CD4-positive, alpha-beta T cell (primary cell): ENCODE measurements at regions of chr5 and their contacts with region 1.

Region 1: DNA sequence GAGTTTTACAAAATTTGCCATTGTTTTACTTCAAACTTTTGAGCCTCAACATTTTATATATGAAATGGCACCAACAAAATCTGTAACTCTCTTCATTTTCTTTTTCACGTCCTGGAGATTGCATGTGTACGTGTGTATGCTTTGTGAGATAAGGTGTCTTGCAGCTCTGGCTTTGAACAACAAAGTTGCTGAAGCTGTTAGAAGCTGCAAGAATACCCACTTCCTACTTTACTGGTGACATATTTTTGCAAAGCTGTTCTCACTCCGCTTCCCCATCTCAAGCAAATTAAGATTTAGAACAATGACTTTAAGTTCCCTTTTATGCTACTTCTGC is 41.8 kb downstream of the FYB1 start:
- DNase-seq: peak in 5 of 14 experiments; percentile 30 to 82 (median 79)
- ATAC-seq: peak; percentile 64
- H3K4me3 ChIP-seq: peak overlapping the region; percentile 29
- H3K4me3 Mint-ChIP-seq: peak overlapping the region; percentile 61
- H3K27ac ChIP-seq: peak overlapping the region; percentile 58 to 85
- H3K27ac Mint-ChIP-seq: peak overlapping the region; percentile 96
- H3K4me1 ChIP-seq: peaks cover 57% of the 10 kb centered on the region
- H3K4me1 Mint-ChIP-seq: peaks cover 97% of the 10 kb centered on the region
- H3K27me3 ChIP-seq: no peaks in the 10 kb centered on the region
- H3K27me3 Mint-ChIP-seq: no peaks in the 10 kb centered on the region
- CTCF ChIP-seq: no peak

Region 2: DNA sequence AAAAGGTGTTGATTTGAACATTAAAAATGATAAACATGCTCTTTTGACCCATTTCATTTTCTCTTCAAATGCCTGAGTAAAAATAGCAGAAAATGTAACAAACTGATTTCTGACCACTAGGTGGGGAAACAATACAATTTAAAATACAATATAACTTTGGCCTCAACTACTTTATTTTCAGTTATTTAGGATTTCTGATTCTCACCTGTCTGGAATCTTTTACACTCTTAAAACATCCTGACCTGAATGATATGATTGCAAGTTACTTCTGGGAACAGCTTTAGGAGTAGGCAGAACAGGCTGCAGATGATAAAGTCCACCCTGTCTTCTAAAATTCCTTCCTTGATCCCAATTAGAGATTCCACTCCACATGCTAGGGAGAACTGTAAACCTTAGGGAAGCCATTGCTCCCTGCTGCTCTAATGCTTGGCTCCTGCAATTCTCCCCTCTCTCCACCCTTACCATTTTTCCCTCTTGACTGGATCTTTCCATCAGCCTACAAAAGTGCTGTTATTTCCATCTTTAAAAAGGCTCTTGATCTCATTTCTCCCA is 28.5 kb before region 1 on chr5:
- CTCF ChIA-PET with region 1: interaction called, 3 read pairs
- POLR2A ChIA-PET with region 1: interaction called, 141 read pairs
- intact Hi-C with region 1: loop called in 1 of 2 experiments (anchors 1 kb)
- DNase-seq: peak in 3 of 14 experiments; percentile 62 to 74 (median 70)
- ATAC-seq: peak; percentile 62
- H3K4me3 ChIP-seq: no peak overlapping the region
- H3K4me3 Mint-ChIP-seq: peak overlapping the region; percentile 0
- H3K27ac ChIP-seq: peak overlapping the region; percentile 58 to 61
- H3K27ac Mint-ChIP-seq: peak overlapping the region; percentile 86
- H3K4me1 ChIP-seq: peaks cover 51% of the 10 kb centered on the region
- H3K4me1 Mint-ChIP-seq: peaks cover 80% of the 10 kb centered on the region
- H3K27me3 ChIP-seq: no peaks in the 10 kb centered on the region
- H3K27me3 Mint-ChIP-seq: no peaks in the 10 kb centered on the region
- CTCF ChIP-seq: peak; percentile 66

Region 3: DNA sequence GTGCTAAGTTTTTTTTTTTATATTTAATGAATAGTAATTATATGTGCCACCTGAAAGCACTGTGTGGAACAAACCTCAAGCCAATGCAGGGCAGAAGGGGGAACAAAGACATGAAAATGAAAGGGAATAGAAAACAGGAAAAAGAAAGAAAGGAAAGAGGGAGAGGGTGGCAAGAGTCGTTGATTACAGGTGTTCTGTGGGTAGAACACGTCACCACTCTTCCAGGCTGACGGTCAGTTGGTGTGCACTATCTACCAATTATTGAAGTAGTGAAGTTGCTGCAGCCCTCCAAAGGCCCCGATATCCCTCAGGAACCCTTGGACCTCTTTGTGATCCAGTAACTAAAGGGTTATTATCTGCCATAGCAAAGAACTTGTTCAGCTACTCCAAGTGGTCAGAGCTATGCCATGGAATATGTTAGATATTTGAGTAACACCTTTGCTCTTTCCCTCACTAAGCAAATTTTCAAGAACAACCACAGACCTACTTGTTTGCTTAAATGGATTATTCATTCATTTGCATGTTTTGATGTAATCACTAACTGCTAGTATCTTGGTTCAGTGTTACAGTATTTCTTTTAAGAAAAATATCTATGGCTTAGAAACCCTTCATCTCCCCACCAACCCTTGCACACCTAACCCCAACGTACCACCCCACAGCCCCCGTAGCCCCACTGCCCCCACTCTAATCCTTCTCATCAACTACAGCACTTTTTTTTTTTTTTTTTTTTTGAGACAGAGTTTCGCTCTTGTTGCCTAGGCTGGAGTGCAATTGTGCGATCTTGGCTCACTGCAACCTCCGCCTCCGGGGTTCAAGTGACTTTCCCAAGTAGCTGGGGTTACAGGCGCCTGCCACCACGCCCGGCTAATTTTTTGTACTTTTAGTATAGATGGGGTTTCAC is 10.5 kb after region 1 on chr5:
- CTCF ChIA-PET with region 1: interaction called, 27 read pairs
- POLR2A ChIA-PET with region 1: interaction called, 408 read pairs
- intact Hi-C with region 1: loop called in 1 of 2 experiments (anchors 1 kb)
- DNase-seq: peak in 6 of 14 experiments; percentile 36 to 63 (median 54)
- ATAC-seq: peak; percentile 37
- H3K4me3 ChIP-seq: peak overlapping the region; percentile 46
- H3K4me3 Mint-ChIP-seq: peak overlapping the region; percentile 91
- H3K27ac ChIP-seq: peak overlapping the region; percentile 67 to 79
- H3K27ac Mint-ChIP-seq: peak overlapping the region; percentile 96
- H3K4me1 ChIP-seq: peaks cover 53% of the 10 kb centered on the region
- H3K4me1 Mint-ChIP-seq: peaks cover 97% of the 10 kb centered on the region
- H3K27me3 ChIP-seq: no peaks in the 10 kb centered on the region
- H3K27me3 Mint-ChIP-seq: no peaks in the 10 kb centered on the region
- CTCF ChIP-seq: no peak

Region 4: GRCh38 chr5:39202597-39203274 is 25.1 kb after region 1 on chr5:
- CTCF ChIA-PET with region 1: interaction called, 7 read pairs
- POLR2A ChIA-PET with region 1: interaction called, 140 read pairs
- intact Hi-C with region 1: loop called in 1 of 2 experiments (anchors 2 kb)
- DNase-seq: peak in 6 of 14 experiments; percentile 35 to 83 (median 68)
- ATAC-seq: peak; percentile 62
- H3K4me3 ChIP-seq: peak overlapping the region; percentile 76
- H3K4me3 Mint-ChIP-seq: peak overlapping the region; percentile 93
- H3K27ac ChIP-seq: peak overlapping the region; percentile 82
- H3K27ac Mint-ChIP-seq: peak overlapping the region; percentile 96
- H3K4me1 ChIP-seq: peaks cover 28% of the 10 kb centered on the region
- H3K4me1 Mint-ChIP-seq: peaks cover 45% of the 10 kb centered on the region
- H3K27me3 ChIP-seq: no peaks in the 10 kb centered on the region
- H3K27me3 Mint-ChIP-seq: no peaks in the 10 kb centered on the region
- CTCF ChIP-seq: no peak

Region 5: DNA sequence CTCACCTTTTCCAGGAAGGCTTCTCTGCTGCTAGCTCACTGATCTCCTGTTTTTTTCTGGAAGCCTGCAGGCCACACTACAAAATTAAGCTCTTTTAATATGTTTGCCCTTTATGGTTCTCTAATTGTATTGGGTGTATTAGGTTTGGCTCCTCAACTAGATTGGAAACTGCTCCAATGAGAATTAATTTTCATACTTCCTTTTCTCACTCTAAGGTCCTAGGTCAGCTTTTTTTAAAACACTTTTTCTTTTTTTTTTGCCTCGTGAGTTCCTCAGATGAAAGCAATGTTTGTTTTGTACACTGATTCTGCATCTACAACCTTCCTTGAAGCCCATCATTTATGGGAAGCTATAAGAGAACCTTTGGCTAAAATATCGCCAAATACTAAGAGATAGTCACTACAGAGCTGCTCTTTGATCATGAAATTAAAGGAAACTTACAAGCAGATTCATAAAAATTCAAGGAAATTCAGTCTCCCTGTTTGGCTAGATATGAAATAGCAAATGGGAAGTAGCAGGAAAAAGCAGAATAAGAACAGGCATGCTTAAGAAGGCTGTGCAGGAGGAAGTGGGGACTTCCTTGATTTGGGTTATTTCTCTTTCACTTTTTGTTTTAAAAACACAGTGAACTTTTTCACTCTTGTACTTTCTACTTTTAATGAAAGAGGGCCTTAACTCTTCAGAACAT is 96.9 kb after region 1 on chr5:
- CTCF ChIA-PET with region 1: interaction called, 4 read pairs
- POLR2A ChIA-PET with region 1: interaction called, 13 read pairs
- intact Hi-C with region 1: no loop called
- DNase-seq: peak in 4 of 14 experiments; percentile 23 to 80 (median 67)
- ATAC-seq: peak; percentile 69
- H3K4me3 ChIP-seq: peak overlapping the region; percentile 35
- H3K4me3 Mint-ChIP-seq: peak overlapping the region; percentile 84
- H3K27ac ChIP-seq: peak overlapping the region; percentile 47 to 80
- H3K27ac Mint-ChIP-seq: peak overlapping the region; percentile 97
- H3K4me1 ChIP-seq: peaks cover 28% of the 10 kb centered on the region
- H3K4me1 Mint-ChIP-seq: peaks cover 55% of the 10 kb centered on the region
- H3K27me3 ChIP-seq: no peaks in the 10 kb centered on the region
- H3K27me3 Mint-ChIP-seq: no peaks in the 10 kb centered on the region
- CTCF ChIP-seq: no peak